ENCODE measurements at regions of chr22 and their contacts with region 1.

Region 1: GRCh38 chr22:29633514-29634312 is 30.3 kb downstream of the NF2 start:
- DNase-seq: no peak

Region 2: DNA sequence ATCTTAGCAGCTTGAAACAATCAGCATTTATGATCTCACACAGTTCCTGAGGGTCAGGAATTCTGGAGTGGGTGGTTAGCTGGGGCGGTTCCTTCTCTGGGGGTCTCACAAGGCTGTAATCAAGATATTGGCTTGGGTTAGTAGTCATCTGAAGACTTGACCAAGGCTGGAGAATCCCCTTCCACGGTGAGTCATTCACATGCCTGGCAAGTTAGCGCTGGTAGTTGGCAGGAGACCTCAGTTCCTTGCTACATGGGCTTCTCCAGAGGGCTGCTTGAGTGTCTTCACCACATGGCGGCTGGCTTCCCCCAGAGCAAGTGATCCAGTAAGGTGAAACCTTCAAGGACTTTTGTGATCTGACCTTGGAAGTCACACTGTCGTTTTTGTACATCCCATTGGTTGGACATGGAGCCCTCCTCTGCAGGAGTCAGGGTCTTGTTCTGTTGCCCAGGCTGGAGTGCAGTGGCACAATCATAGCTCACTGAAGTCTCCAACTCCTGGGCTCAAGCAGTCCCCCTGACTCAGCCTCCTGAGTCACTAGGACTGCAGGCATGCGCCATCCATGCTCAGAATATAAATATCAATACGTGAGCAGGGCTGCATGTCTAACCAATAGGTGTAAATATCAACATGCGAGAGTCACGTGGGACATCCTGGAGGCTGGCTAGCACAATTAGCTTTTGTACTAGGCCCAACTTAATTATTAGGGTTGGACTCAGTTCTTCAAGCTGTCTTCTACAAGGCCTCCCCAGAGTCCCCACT is 45.6 kb before region 1 on chr22:
- intact Hi-C with region 1: no loop called
- DNase-seq: peak; percentile 86

Region 3: DNA sequence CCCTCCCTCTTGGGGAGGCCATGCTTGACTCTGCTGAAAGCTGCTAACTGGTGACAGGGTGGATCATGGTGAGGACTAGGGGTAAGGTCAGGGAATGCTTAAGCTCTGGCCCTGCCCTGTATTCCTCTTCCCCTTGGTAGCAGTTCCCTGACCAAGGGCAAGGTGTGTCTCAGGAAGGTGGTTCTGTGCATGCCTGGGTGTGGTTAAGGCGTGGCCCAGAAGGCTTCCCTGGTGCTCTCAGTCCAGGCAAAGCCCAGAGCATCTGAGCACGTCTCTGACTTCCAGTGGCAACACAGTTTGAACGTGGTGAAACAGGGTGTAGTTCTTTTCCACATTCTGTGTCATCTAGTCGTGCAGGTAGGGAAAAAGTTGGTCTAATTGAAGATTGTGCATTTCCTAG is 393.5 kb after region 1 on chr22:
- intact Hi-C with region 1: no loop called
- DNase-seq: no peak

Region 4: DNA sequence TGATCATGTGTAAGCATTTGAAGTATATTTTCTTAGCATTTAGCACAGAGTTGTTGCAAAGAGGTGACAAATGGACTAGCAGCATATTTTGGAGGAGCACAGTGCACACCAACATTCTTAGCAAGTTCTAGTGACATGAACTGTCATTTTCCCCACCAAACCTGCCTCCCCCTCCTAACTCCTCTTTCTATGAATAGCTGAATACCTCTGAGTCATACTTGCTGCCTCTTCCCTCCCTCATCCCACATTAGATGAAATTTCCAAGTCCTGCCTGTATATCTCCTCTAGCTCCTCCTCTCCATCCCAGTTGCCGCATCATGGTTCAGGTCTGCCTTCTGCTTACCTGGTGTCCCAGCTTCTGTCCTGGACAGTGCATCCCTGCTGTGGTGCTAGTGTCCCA is 1068.2 kb after region 1 on chr22:
- intact Hi-C with region 1: loop called in 1 of 2 experiments (anchors 5 kb)
- DNase-seq: no peak

Measured in posterior vena cava (tissue), 2 donors.